PC-9 (cell line): ENCODE measurements at regions of chr20 and their contacts with region 1.

Region 1: DNA sequence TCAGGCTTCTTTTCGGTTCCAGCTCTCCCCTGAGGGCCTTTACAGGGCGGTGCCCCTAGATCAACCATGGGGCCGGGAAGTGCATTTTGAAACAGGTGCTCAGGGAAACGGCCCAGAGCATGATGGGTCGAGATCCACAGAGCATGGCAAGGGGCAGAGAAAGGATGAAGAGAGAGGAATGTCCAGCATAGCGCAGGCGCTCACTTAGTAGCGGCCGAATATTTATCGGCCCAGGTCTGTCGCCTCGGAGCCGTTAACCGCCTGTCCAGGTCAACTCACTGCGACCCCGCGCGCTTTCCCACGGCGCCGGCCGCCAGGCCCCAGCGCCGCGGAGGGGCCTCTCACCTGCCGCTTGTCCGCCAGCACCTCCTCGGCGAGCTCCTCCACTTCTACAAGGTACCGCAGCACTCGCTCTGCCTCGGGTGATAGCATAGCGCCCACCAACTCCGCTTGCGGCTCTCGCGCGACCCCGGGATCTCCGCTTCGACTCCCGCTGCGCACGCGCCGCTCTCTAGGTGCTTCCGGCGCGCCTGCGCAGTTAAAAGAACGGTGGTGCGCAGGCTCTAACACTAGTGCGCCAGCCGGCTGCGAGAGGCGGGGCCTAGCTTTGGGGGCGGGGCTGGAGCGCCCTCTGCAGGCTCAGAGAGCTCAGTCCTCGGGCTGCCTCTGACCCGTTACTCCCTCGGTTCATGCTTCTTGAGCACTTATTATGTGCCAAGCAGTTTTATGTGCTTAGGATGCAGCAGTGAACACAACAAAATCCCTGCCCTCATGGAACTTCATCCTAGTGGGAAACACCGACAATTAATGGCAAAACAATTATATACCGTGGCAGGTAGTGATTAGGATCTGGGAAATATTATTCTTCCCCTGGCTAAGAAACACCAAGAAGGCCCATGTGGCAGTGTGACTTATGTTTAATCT is at the start of gene PDRG1:
- DNase-seq: peak; percentile 83 to 98
- H3K4me3 ChIP-seq: peak within 1 kb of the TSS; percentile 99
- H3K27ac ChIP-seq: no peak within 1 kb of the TSS
- H3K4me1 ChIP-seq: peaks cover 8% of the 10 kb centered on the region
- H3K27me3 ChIP-seq: peaks cover 7% of the 10 kb centered on the region; the same call in 1 of the 2 replicates
- CTCF ChIP-seq: peak; percentile 90
- total RNA-seq, gene PDRG1: 13.7 and 15.3 TPM in 2 replicates

Region 2: GRCh38 chr20:31822421-31823330 is 129.1 kb before region 1 on chr20:
- CTCF ChIA-PET with region 1: no interaction called
- POLR2A ChIA-PET with region 1: interaction called, 11 read pairs
- intact Hi-C with region 1: loop called (anchors 1 kb)
- DNase-seq: peak in 1 of 2 experiments; percentile 76
- H3K4me3 ChIP-seq: no peak overlapping the region
- H3K27ac ChIP-seq: no peak overlapping the region
- H3K4me1 ChIP-seq: no peaks in the 10 kb centered on the region
- H3K27me3 ChIP-seq: no peaks in the 10 kb centered on the region
- CTCF ChIP-seq: peak; percentile 99

Region 3: GRCh38 chr20:31849455-31849925 is 102.3 kb before region 1 on chr20:
- CTCF ChIA-PET with region 1: interaction called, 21 read pairs
- POLR2A ChIA-PET with region 1: no interaction called
- intact Hi-C with region 1: loop called (anchors 1 kb)
- DNase-seq: peak in 1 of 2 experiments; percentile 54
- H3K4me3 ChIP-seq: no peak overlapping the region
- H3K27ac ChIP-seq: no peak overlapping the region
- H3K4me1 ChIP-seq: no peaks in the 10 kb centered on the region
- H3K27me3 ChIP-seq: peaks cover 33% of the 10 kb centered on the region
- CTCF ChIP-seq: no peak

Region 4: DNA sequence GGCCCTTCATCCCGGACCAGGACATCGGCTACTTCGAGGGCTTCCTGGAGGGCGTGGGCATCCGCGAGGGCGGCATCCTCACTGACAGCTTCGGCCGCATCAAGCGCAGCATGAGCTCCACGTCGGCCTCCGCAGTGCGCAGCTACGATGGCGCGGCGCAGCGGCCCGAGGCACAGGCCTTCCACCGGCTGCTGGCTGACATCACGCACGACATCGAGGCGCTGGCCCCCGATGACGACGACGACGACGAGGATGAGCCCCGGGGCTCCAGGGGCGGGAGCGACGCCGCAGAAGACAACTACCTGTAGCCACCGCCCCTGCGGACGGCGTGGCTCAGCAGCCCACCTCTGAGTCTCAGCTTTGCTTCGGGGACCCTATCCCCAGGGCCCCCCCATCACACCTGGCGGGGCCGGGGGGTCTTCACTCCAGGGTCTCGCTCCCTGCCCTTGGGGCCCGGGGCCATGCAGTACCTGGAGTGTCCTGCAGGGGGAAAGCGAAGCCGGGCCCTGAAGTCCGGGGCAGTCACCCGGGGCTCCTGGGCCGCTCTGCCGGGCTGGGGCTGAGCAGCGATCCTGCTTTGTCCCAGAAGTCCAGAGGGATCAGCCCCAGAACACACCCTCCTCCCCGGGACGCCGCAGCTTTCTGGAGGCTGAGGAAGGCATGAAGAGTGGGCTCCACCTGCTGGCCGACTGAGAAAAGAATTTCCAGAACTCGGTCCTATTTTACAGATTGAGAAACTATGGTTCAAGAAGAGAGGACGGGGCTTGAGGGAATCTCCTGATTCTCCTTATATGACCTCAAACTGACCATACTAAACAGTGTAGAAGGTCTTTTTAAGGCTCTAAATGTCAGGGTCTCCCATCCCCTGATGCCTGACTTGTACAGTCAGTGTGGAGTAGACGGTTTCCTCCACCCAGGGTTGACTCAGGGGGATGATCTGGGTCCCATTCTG is 79.5 kb after region 1 on chr20:
- CTCF ChIA-PET with region 1: no interaction called
- POLR2A ChIA-PET with region 1: no interaction called
- intact Hi-C with region 1: loop called (anchors 5 kb)
- DNase-seq: peak; percentile 50 to 75
- H3K4me3 ChIP-seq: no peak overlapping the region
- H3K27ac ChIP-seq: no peak overlapping the region
- H3K4me1 ChIP-seq: no peaks in the 10 kb centered on the region
- H3K27me3 ChIP-seq: peaks cover 49% of the 10 kb centered on the region
- CTCF ChIP-seq: peak; percentile 98

Region 5: DNA sequence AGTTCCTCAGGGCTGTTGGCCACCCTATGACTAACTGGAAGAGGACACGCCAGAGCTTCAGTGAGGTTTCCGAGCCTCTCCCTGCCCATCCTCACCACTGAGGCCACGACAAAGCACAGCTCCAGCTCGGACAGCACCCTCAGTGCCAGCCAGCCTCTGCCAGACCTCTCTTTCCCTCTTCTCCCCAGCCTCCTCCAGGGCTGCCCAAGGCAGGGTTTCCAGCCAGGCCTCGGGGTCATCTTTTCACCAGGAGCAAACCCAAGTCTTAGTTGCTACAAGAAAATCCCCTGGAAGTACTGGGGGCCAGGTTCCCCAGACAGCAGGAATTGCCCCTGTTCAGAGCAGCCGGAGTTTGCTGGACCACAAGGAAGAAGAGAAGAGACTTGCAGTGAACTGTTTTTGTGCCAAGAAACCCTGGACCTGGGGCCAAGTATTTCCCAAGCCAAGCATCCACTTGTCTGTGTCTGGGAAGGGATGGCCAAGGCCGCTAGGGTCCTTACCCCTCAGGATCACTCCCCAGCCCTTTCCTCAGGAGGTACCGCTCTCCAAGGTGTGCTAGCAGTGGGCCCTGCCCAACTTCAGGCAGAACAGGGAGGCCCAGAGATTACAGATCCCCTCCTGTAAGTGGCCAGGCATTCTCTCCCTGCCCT is 214.2 kb after region 1 on chr20:
- CTCF ChIA-PET with region 1: no interaction called
- POLR2A ChIA-PET with region 1: interaction called, 19 read pairs
- intact Hi-C with region 1: no loop called
- DNase-seq: no peak
- H3K4me3 ChIP-seq: no peak overlapping the region
- H3K27ac ChIP-seq: no peak overlapping the region
- H3K4me1 ChIP-seq: no peaks in the 10 kb centered on the region
- H3K27me3 ChIP-seq: no peaks in the 10 kb centered on the region
- CTCF ChIP-seq: no peak

Region 6: GRCh38 chr20:32231847-32232246 is 280.1 kb after region 1 on chr20:
- CTCF ChIA-PET with region 1: no interaction called
- POLR2A ChIA-PET with region 1: no interaction called
- intact Hi-C with region 1: no loop called
- DNase-seq: no peak
- H3K4me3 ChIP-seq: no peak overlapping the region
- H3K27ac ChIP-seq: no peak overlapping the region
- H3K4me1 ChIP-seq: no peaks in the 10 kb centered on the region
- H3K27me3 ChIP-seq: no peaks in the 10 kb centered on the region
- CTCF ChIP-seq: no peak